ENCODE measurements at regions of chr19 and their contacts with region 1.

Region 1: GRCh38 chr19:39671738-39672363 is 16.1 kb downstream of the LGALS16 start:
- DNase-seq: peak in 1 of 2 donors; percentile 26
- ATAC-seq: peak in 1 of 8 donors; percentile 56
- H3K4me3 ChIP-seq: no peak overlapping the region
- H3K27ac ChIP-seq: no peak overlapping the region
- H3K4me1 ChIP-seq: peaks cover 0 to 9% (median 0%) of the 10 kb centered on the region in 9 donors
- H3K27me3 ChIP-seq: peaks cover 0 to 24% (median 10%) of the 10 kb centered on the region in 7 donors
- CTCF ChIP-seq: peak; percentile 20 to 66 (median 49)

Region 2: GRCh38 chr19:39550197-39550596 is 121.7 kb before region 1 on chr19:
- intact Hi-C with region 1: loop called in 9 of 10 experiments (anchors 2 to 10 kb)
- DNase-seq: no peak
- ATAC-seq: no peak
- H3K4me3 ChIP-seq: no peak overlapping the region
- H3K27ac ChIP-seq: no peak overlapping the region
- H3K4me1 ChIP-seq: peaks cover 0 to 21% (median 0%) of the 10 kb centered on the region in 9 donors
- H3K27me3 ChIP-seq: peaks cover 0 to 32% (median 6%) of the 10 kb centered on the region in 7 donors
- CTCF ChIP-seq: no peak

Region 3: GRCh38 chr19:39813264-39813993 is 141.6 kb after region 1 on chr19:
- intact Hi-C with region 1: no loop called
- DNase-seq: no peak
- ATAC-seq: no peak
- H3K4me3 ChIP-seq: no peak overlapping the region
- H3K27ac ChIP-seq: no peak overlapping the region
- H3K4me1 ChIP-seq: peaks cover 0 to 18% (median 5%) of the 10 kb centered on the region in 9 donors
- H3K27me3 ChIP-seq: no peaks in the 10 kb centered on the region
- CTCF ChIP-seq: no peak

Measured in heart right ventricle (tissue), 16 donors.